ENCODE measurements at regions of chr14 and their contacts with region 1.

Region 1: GRCh38 chr14:64891839-64892375 is 12.2 kb upstream of the SPTB start:
- DNase-seq: peak; percentile 49
- H3K4me3 Mint-ChIP-seq: no peak overlapping the region
- H3K27ac Mint-ChIP-seq: no peak overlapping the region
- H3K4me1 Mint-ChIP-seq: no peaks in the 10 kb centered on the region
- H3K27me3 Mint-ChIP-seq: no peaks in the 10 kb centered on the region

Region 2: GRCh38 chr14:64671591-64671990 is 220.3 kb before region 1 on chr14:
- CTCF ChIA-PET with region 1: interaction called, 33 read pairs
- intact Hi-C with region 1: loop called (anchors 5 kb)
- DNase-seq: no peak
- H3K4me3 Mint-ChIP-seq: no peak overlapping the region
- H3K27ac Mint-ChIP-seq: no peak overlapping the region
- H3K4me1 Mint-ChIP-seq: peaks cover 16% of the 10 kb centered on the region
- H3K27me3 Mint-ChIP-seq: no peaks in the 10 kb centered on the region

Region 3: GRCh38 chr14:64772393-64772950 is 119.4 kb before region 1 on chr14:
- CTCF ChIA-PET with region 1: interaction called, 10 read pairs
- intact Hi-C with region 1: no loop called
- DNase-seq: no peak
- H3K4me3 Mint-ChIP-seq: no peak overlapping the region
- H3K27ac Mint-ChIP-seq: no peak overlapping the region
- H3K4me1 Mint-ChIP-seq: peaks cover 9% of the 10 kb centered on the region
- H3K27me3 Mint-ChIP-seq: no peaks in the 10 kb centered on the region

Region 4: DNA sequence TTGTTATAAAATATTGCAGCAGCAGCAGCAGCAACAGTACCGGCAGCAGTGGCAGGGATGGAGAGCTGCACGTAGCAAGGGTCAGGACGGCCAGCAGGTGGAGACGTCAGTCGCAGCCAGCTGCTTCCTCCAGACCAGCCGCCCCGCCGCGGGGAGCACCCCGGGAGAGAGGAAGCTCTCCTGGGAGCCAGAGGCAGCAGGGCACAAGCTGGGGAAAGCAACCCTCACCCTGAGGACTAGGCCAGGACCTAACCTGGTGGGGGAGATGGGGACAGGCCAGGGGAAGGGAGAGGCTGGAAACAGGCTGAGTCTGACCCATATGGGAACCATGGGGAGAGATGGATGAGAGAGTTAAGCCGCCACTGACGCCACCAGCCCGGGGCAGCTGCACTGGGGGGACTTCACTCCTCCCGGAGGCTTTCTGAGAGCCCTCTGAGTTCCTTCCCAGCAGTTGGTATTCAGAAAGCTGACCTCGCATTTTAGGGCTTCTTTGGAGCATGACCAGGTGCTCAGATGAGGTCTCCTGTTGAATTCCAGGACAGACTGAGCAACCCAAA is 68.5 kb before region 1 on chr14:
- CTCF ChIA-PET with region 1: interaction called, 153 read pairs
- intact Hi-C with region 1: loop called (anchors 5 kb)
- DNase-seq: peak; percentile 82
- H3K4me3 Mint-ChIP-seq: peak overlapping the region; percentile 13
- H3K27ac Mint-ChIP-seq: no peak overlapping the region
- H3K4me1 Mint-ChIP-seq: peaks cover 4% of the 10 kb centered on the region
- H3K27me3 Mint-ChIP-seq: peaks cover 8% of the 10 kb centered on the region

Region 5: GRCh38 chr14:64848239-64848638 is 43.7 kb before region 1 on chr14:
- CTCF ChIA-PET with region 1: interaction called, 10 read pairs
- intact Hi-C with region 1: no loop called
- DNase-seq: no peak
- H3K4me3 Mint-ChIP-seq: no peak overlapping the region
- H3K27ac Mint-ChIP-seq: no peak overlapping the region
- H3K4me1 Mint-ChIP-seq: peaks cover 7% of the 10 kb centered on the region
- H3K27me3 Mint-ChIP-seq: peaks cover 15% of the 10 kb centered on the region

Region 6: GRCh38 chr14:64880221-64881121 is 11.4 kb before region 1 on chr14:
- CTCF ChIA-PET with region 1: interaction called, 46 read pairs
- intact Hi-C with region 1: no loop called
- DNase-seq: peak; percentile 67
- H3K4me3 Mint-ChIP-seq: peak overlapping the region; percentile 81
- H3K27ac Mint-ChIP-seq: no peak overlapping the region
- H3K4me1 Mint-ChIP-seq: peaks cover 1% of the 10 kb centered on the region
- H3K27me3 Mint-ChIP-seq: peaks cover 13% of the 10 kb centered on the region

Region 7: GRCh38 chr14:64971943-64972791 is 80.3 kb after region 1 on chr14 and contains the start of gene RAB15:
- CTCF ChIA-PET with region 1: no interaction called
- intact Hi-C with region 1: no loop called
- DNase-seq: peak; percentile 33
- H3K4me3 Mint-ChIP-seq: peak within 1 kb of the TSS; percentile 75
- H3K27ac Mint-ChIP-seq: no peak within 1 kb of the TSS
- H3K4me1 Mint-ChIP-seq: peaks cover 10% of the 10 kb centered on the region
- H3K27me3 Mint-ChIP-seq: no peaks in the 10 kb centered on the region
- total RNA-seq, gene RAB15: 2.4 TPM

Measured in activated naive CD4-positive, alpha-beta T cell treated with anti-CD3 and anti-CD28 coated beads for 36 hours (primary cell).